Right cardiac atrium (tissue), 5 donors: ENCODE measurements at regions of chr2 and their contacts with region 1.

Region 1: DNA sequence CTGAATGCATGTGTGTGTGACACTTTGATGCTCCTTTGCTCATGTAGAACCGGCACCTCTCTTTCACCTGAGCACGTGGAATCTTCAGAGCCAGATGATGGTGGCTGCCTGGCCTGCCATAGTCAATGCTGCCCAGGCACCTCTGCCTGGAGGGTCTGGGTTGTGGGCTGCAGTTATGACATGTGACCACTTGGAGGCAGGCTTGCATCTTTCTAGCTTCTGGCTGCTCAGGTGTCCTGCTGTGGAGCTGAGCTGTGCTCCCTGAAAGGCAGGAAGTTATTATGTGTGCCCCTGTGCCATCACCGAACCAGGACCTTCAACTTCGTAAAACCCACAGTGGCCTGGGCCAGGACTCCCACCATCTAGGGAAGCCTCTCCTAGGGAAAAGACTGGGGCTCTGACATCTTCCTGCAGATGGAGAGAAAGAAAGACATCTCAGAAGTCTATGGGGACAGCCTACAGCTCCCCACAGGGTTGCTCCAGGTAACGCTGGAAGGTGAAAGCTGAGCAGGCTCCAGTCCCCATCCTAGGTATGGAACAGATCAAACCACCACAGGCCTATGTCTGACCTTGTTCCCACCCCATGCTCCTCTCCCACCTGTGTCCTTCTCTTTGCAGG is 30.2 kb downstream of the PSD4 start:
- DNase-seq: peak; percentile 43 to 84 (median 80)
- ATAC-seq: peak; percentile 56 to 78
- H3K4me3 ChIP-seq: no peak overlapping the region
- H3K27ac ChIP-seq: no peak overlapping the region
- H3K4me1 ChIP-seq: no peaks in the 10 kb centered on the region
- H3K27me3 ChIP-seq: no peaks in the 10 kb centered on the region

Region 2: GRCh38 chr2:111887819-111888223 is 1316.2 kb before region 1 on chr2:
- intact Hi-C with region 1: no loop called
- DNase-seq: peak; percentile 74 to 91 (median 88)
- ATAC-seq: peak; percentile 38 to 50
- H3K4me3 ChIP-seq: no peak overlapping the region
- H3K27ac ChIP-seq: no peak overlapping the region
- H3K4me1 ChIP-seq: no peaks in the 10 kb centered on the region
- H3K27me3 ChIP-seq: no peaks in the 10 kb centered on the region

Region 3: DNA sequence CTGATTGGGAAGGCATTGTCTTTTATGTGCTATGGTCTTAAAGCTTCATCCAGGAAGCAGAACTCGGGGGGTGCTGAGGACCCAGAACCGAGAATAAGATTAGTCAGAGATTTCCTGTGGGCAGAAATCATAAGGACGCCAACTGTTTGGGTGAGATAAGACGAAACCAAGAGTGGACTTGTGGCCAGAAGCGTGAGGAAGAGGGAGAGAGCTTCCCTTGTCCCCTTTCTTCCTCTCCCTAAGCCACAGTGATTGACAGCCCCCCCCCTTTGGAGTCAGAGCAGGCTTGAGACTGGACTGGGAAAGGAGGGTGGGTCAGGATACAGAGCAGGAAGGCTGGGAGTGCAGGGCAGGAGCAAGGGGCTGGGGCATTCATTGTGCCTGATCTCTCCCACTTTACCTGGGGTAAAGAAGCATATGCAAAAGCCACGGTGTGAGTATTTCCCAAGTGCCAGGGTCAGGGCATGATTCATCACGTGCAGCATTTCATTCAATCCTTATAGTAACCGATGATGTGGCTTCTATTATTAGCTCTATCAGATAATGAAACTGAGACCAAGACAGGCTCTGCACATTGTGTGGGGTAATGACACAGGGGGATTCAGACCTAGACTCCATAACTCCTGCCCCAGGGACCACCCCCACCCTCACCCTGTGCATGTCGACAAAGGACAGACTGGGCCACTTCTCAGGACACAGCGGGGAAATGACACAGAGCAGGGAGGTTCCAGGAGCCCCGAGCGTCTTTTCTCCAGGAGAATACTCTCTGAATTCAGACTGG is 79.6 kb before region 1 on chr2:
- intact Hi-C with region 1: no loop called
- DNase-seq: no peak
- ATAC-seq: peak; percentile 33 to 40
- H3K4me3 ChIP-seq: no peak overlapping the region
- H3K27ac ChIP-seq: no peak overlapping the region
- H3K4me1 ChIP-seq: peaks cover 6% of the 10 kb centered on the region
- H3K27me3 ChIP-seq: no peaks in the 10 kb centered on the region

Region 4: DNA sequence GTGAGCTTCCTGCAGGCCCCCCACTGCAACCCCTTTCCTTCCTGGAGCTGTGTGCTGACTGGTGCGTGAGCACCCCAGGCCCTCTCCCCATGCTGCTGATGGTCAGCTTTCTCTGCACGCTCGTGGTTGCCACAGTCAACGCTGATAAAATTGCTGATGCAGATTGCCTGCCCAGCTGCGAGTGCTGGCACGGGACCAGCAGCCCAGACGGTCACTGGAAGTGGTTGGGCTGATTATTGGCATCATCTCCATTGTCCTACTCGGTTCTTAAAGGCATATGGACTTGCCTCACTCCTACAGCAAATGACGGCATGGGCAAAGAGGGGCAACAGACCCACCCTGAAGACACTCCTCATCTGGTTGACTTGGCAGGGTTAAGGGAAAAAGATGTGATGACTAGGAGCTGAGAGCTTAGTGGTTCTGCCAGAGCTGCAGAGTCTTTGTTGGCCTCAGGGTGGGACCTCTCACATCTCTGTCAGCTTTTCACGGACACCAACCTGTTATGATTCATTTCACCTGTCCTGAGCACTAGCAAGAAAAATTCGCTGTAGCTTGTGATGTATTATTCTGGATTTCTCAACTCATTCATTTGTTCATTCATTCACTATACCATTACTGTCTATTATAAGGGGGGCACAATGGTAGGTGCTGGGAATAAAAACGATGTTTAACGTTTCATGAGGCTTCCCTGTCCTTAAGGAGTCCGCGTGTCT is 36.3 kb after region 1 on chr2:
- intact Hi-C with region 1: loop called in 2 of 4 experiments (anchors 5 kb)
- DNase-seq: peak; percentile 92 to 97 (median 96)
- ATAC-seq: peak; percentile 81 to 85
- H3K4me3 ChIP-seq: no peak overlapping the region
- H3K27ac ChIP-seq: peak overlapping the region; percentile 73
- H3K4me1 ChIP-seq: peaks cover 9% of the 10 kb centered on the region
- H3K27me3 ChIP-seq: no peaks in the 10 kb centered on the region

Region 5: DNA sequence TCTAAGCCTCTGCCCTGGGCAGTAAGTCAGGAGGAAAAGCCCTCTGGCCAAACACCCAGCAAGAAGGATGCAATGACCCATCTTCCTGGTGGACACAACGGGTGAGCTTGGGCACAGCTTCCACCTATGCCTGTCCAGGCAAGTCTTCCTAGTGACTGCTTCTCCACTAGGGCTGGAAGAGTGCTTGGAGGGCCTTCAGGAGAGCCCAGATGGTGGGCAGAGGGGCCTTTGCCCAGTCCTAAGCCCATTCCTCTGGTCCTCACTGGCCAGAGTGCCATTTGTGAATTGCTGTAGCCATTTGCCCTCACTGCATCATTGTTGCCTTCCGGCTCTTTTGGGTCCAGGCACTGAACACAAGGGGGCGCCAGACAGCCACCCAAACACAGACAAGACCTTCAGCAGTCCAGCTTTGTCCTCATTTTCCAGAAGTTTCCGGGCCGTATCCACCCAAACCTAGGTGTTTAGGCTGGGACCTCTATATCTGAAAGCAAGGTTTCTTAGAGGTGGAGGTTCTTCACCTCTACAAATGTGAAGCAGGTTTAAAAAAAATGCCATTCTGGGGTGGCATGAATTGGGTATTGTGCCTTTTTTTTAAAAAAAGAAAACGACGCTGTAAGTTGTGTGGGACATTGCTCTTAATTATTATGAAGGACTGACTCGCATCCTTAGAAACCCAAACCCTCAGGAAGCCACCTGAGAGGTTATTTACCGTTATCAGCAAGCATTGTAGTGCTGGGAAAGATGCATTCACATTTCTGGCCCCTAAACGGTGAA is 45.2 kb after region 1 on chr2:
- intact Hi-C with region 1: loop called in 2 of 4 experiments (anchors 5 kb)
- DNase-seq: peak; percentile 80 to 90 (median 87)
- ATAC-seq: peak; percentile 62 to 78
- H3K4me3 ChIP-seq: no peak overlapping the region
- H3K27ac ChIP-seq: no peak overlapping the region
- H3K4me1 ChIP-seq: no peaks in the 10 kb centered on the region
- H3K27me3 ChIP-seq: no peaks in the 10 kb centered on the region

Region 6: DNA sequence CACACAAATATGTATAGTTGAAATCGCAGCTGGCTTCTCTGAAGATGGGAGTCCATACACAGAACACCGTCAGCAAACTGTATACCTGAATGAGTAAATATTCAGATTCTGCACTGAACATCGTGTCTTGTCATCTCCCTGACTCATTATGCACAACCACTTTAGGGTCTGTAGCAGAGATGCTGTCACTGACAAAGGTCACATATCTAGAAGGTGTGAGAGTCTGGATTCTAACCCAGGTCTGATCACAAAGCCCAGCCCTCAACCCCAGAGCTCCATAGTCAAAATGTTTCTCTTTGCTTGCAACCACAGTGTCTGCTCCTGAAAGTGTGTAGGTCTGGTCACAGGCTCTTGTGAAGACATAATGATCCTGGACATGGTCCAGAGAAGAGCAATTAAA is 153.1 kb after region 1 on chr2:
- intact Hi-C with region 1: no loop called
- DNase-seq: no peak
- ATAC-seq: no peak
- H3K4me3 ChIP-seq: no peak overlapping the region
- H3K27ac ChIP-seq: no peak overlapping the region
- H3K4me1 ChIP-seq: no peaks in the 10 kb centered on the region
- H3K27me3 ChIP-seq: no peaks in the 10 kb centered on the region

Region 7: DNA sequence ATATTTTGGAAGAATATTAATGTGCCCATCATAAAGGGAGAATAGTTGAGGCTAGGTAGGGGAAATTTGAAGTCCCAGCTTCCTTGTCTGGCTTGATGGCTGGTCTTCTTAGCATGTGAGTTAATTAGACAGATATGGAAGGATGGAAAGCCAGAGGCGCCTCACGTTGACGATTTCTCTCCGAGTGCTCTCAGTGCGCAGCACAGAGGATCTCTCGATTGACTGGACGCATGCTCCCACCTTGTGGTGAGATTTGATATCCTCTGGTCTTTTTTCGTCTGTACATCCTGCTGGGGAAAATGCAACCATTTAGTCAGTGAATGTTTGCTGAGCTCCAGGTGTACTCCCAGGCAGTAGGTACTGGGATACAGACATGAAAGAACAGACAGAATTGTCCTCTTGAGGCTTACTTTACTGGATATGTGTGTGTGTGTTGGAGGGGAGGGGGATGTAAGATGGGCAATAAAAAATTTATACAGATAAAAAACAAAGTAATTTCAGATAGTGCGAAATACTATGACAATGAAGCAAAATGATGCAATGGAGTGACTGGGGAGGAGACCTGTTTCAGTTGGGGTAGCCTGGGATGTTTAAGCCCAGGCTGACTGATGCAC is 166.6 kb after region 1 on chr2:
- intact Hi-C with region 1: loop called in 2 of 4 experiments (anchors 5 kb)
- DNase-seq: peak; percentile 63 to 77 (median 74)
- ATAC-seq: peak; percentile 82 to 90
- H3K4me3 ChIP-seq: no peak overlapping the region
- H3K27ac ChIP-seq: no peak overlapping the region
- H3K4me1 ChIP-seq: peaks cover 1% of the 10 kb centered on the region
- H3K27me3 ChIP-seq: no peaks in the 10 kb centered on the region

Region 8: DNA sequence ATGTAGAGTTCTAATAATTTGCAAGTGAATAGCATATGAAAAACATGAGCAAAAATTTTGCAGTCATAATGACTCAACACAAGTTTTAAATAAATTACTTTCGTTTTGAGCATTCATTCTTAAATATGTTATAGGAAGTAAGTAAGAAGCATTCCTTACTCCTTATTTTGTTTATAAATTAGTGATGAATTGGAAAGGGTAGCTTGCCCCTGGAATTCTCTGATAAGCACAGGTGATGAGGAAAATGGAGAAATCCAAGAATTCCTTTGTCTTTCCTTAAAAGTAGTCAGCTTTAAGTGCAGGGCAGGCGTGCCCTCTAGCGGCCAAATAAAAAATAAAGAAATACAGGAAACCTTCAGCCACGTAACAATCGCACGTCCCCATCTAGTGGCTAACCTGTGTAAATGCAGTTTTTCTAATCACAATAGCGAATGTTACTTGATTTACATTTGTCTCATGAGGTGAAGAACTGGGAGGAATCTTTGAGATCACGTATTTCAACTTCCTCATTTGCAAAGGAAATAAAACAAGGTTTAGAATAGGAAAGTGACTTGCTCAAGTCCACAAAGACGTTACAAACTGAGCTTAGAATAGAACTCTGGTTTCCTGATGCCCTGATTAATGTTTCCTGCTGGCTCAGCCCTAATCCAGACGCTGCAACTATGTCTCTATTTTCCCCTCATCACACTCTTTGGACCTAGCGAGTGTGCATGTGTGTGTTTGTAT is 186.3 kb after region 1 on chr2:
- intact Hi-C with region 1: loop called in 1 of 4 experiments (anchors 5 kb)
- DNase-seq: peak in 1 of 3 donors; percentile 29
- ATAC-seq: peak; percentile 60 to 76
- H3K4me3 ChIP-seq: no peak overlapping the region
- H3K27ac ChIP-seq: no peak overlapping the region
- H3K4me1 ChIP-seq: no peaks in the 10 kb centered on the region
- H3K27me3 ChIP-seq: no peaks in the 10 kb centered on the region